ENCODE measurements at regions of chr12 and their contacts with region 1.

Region 1: DNA sequence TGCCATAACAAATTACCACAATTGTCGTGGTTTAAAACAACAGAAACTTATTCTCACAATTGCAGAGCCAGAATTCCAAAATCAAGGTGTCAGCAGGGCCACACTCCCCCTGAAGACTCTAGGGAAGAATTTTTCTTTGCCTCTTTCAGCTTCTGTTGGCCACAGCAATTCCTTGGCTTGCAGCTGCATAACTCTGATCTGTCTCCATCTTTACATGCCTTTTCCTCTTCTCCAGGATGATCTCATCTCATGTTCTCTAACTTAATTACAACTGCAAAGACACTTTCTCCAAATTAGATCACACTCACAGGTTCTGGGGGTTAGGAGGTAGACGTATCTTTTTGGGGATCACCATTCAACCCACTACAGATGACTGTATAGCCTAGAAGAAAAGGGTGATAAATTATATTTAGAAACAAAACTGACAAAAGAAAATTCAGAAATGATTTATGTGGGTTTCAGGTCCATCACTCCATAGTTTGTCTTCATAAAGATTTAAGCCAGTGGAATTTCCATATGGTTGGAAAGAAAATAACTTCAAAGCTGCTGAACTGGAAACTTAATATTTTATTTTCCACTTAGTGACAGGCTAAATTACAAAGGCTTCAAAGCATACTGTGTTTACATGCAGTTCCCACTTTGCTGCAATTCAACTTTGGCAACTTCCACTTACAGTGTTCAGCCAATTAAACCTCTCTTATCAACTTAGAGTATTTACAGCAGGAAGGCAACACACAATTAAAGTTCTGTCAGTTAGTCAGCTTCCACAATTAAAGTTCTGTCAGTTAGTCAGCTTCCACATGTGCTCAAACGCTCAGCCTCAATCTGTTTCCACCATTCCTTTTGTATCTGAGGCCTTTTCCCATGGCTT is 213.3 kb downstream of the EPS8 start:
- DNase-seq: no peak
- ATAC-seq: no peak
- H3K4me3 ChIP-seq: no peak overlapping the region
- H3K27ac ChIP-seq: no peak overlapping the region
- H3K4me1 ChIP-seq: peaks cover 7% of the 10 kb centered on the region
- H3K27me3 ChIP-seq: no peaks in the 10 kb centered on the region
- CTCF ChIP-seq: no peak
- EP300 ChIP-seq: no peak
- POLR2A ChIP-seq: no peak
- RAD21 ChIP-seq: no peak

Region 2: DNA sequence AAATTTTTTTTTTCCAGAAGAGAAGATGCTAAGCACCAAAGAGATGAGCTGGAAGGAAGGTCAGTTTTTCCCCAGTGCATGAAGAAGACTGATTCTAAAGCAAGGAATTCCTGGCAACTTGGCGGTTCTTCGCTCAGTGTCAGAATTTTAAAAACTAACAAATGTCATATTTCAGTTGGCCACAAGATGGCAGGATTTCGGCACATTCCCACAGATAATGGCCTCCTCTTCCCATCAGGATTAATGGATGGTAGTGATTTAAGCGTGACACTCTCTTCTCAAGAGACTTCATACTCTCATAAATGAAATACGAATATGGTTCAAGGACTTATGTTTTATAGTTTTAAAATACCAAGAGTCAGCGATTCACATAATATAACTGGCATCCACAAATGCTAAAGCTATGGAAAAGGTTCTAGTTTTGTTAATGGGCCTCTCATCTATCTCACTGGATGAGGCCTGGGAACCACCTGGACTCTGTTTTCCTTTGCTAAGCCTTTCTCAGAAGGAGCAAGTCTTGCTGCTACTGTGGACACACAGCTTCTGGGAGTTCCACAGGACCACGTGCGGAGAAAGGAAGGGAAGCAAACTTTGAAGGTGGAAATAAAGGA is 299.7 kb before region 1 on chr12:
- CTCF ChIA-PET with region 1: interaction called, 6 read pairs
- POLR2A ChIA-PET with region 1: no interaction called
- RAD21 ChIA-PET with region 1: interaction called, 3 read pairs
- SMC1A ChIA-PET with region 1: interaction called, 3 read pairs
- in situ Hi-C with region 1: loop called (anchors 5 kb)
- intact Hi-C with region 1: no loop called
- DNase-seq: no peak
- ATAC-seq: peak; percentile 29
- H3K4me3 ChIP-seq: no peak overlapping the region
- H3K27ac ChIP-seq: no peak overlapping the region
- H3K4me1 ChIP-seq: no peaks in the 10 kb centered on the region
- H3K27me3 ChIP-seq: no peaks in the 10 kb centered on the region
- CTCF ChIP-seq: peak; percentile 52 to 69 (median 57); a peak in 5 of 6 replicates
- EP300 ChIP-seq: no peak
- POLR2A ChIP-seq: no peak
- RAD21 ChIP-seq: peak; percentile 54

Region 3: GRCh38 chr12:15540469-15540872 is 35.4 kb before region 1 on chr12:
- CTCF ChIA-PET with region 1: interaction called, 1,078 read pairs
- POLR2A ChIA-PET with region 1: interaction called, 54 read pairs
- RAD21 ChIA-PET with region 1: interaction called, 47 read pairs
- SMC1A ChIA-PET with region 1: interaction called, 853 read pairs
- in situ Hi-C with region 1: no loop called
- intact Hi-C with region 1: no loop called
- DNase-seq: no peak
- ATAC-seq: no peak
- H3K4me3 ChIP-seq: no peak overlapping the region
- H3K27ac ChIP-seq: no peak overlapping the region
- H3K4me1 ChIP-seq: peaks cover 7% of the 10 kb centered on the region
- H3K27me3 ChIP-seq: no peaks in the 10 kb centered on the region
- CTCF ChIP-seq: no peak
- EP300 ChIP-seq: no peak
- POLR2A ChIP-seq: no peak
- RAD21 ChIP-seq: no peak

Region 4: DNA sequence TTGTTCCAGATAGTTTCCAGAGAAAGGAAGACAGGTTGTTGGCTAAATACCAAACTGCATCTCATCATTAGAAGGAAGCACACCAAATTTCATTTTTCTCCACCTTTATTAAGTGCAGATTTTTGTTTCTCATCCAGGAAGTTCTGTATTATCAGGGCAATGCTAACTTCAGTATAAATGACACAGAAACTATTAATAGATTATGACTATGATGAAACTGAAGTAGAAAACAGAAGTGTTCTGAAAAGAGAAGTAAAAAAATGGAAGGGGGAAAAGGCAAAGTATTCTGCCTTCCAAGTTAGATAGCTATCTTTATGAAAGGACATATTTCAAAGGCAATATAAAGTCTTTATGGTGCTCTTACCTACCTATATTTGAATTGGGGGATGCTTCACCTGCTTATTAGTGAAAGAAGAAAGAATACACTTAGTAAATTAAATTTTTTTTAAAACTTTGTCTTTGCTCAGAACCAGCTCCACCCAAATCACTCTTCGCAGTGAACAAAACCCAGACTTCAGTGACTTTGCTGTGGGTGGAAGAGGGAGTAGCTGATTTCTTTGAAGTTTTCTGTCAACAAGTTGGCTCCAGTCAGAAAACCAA is 29.7 kb before region 1 on chr12:
- CTCF ChIA-PET with region 1: interaction called, 44 read pairs
- POLR2A ChIA-PET with region 1: interaction called, 54 read pairs
- RAD21 ChIA-PET with region 1: interaction called, 47 read pairs
- SMC1A ChIA-PET with region 1: interaction called, 160 read pairs
- in situ Hi-C with region 1: no loop called
- intact Hi-C with region 1: no loop called
- DNase-seq: peak; percentile 25
- ATAC-seq: peak; percentile 87
- H3K4me3 ChIP-seq: peak overlapping the region; percentile 52
- H3K27ac ChIP-seq: peak overlapping the region; percentile 66
- H3K4me1 ChIP-seq: peaks cover 19% of the 10 kb centered on the region
- H3K27me3 ChIP-seq: no peaks in the 10 kb centered on the region
- CTCF ChIP-seq: no peak
- EP300 ChIP-seq: no peak
- POLR2A ChIP-seq: no peak
- RAD21 ChIP-seq: no peak

Region 5: GRCh38 chr12:15556411-15557102 is 19.3 kb before region 1 on chr12:
- CTCF ChIA-PET with region 1: interaction called, 26 read pairs
- POLR2A ChIA-PET with region 1: interaction called, 27 read pairs
- RAD21 ChIA-PET with region 1: interaction called, 32 read pairs
- SMC1A ChIA-PET with region 1: interaction called, 160 read pairs
- in situ Hi-C with region 1: no loop called
- intact Hi-C with region 1: no loop called
- DNase-seq: no peak
- ATAC-seq: no peak
- H3K4me3 ChIP-seq: no peak overlapping the region
- H3K27ac ChIP-seq: no peak overlapping the region
- H3K4me1 ChIP-seq: no peaks in the 10 kb centered on the region
- H3K27me3 ChIP-seq: no peaks in the 10 kb centered on the region
- CTCF ChIP-seq: no peak
- EP300 ChIP-seq: no peak
- POLR2A ChIP-seq: no peak
- RAD21 ChIP-seq: no peak

Region 6: GRCh38 chr12:15563663-15564062 is 12.2 kb before region 1 on chr12:
- CTCF ChIA-PET with region 1: interaction called, 26 read pairs
- POLR2A ChIA-PET with region 1: interaction called, 27 read pairs
- RAD21 ChIA-PET with region 1: interaction called, 32 read pairs
- SMC1A ChIA-PET with region 1: interaction called, 101 read pairs
- in situ Hi-C with region 1: no loop called
- intact Hi-C with region 1: no loop called
- DNase-seq: no peak
- ATAC-seq: no peak
- H3K4me3 ChIP-seq: no peak overlapping the region
- H3K27ac ChIP-seq: no peak overlapping the region
- H3K4me1 ChIP-seq: no peaks in the 10 kb centered on the region
- H3K27me3 ChIP-seq: no peaks in the 10 kb centered on the region
- CTCF ChIP-seq: no peak
- EP300 ChIP-seq: no peak
- POLR2A ChIP-seq: no peak
- RAD21 ChIP-seq: no peak

Region 7: GRCh38 chr12:15590180-15590826 is 14.4 kb after region 1 on chr12:
- CTCF ChIA-PET with region 1: interaction called, 137 read pairs
- POLR2A ChIA-PET with region 1: no interaction called
- RAD21 ChIA-PET with region 1: interaction called, 79 read pairs
- SMC1A ChIA-PET with region 1: interaction called, 85 read pairs
- in situ Hi-C with region 1: no loop called
- intact Hi-C with region 1: no loop called
- DNase-seq: peak; percentile 46
- ATAC-seq: peak; percentile 97
- H3K4me3 ChIP-seq: peak overlapping the region; percentile 46; the same call in 1 of the 2 replicates
- H3K27ac ChIP-seq: no peak overlapping the region
- H3K4me1 ChIP-seq: peaks cover 4% of the 10 kb centered on the region; the same call in 1 of the 2 replicates
- H3K27me3 ChIP-seq: 0 out of 4 replicates have a peak, but pooled peaks cover 0 to 1% of the 10 kb centered on the region in 2 experiments
- CTCF ChIP-seq: peak; percentile 85 to 94 (median 86); a peak in 5 of 6 replicates
- EP300 ChIP-seq: no peak
- POLR2A ChIP-seq: no peak
- RAD21 ChIP-seq: peak; percentile 97